Mammary epithelial cell (primary cell): ENCODE measurements at regions of chr11 and their contacts with region 1.

Region 1: DNA sequence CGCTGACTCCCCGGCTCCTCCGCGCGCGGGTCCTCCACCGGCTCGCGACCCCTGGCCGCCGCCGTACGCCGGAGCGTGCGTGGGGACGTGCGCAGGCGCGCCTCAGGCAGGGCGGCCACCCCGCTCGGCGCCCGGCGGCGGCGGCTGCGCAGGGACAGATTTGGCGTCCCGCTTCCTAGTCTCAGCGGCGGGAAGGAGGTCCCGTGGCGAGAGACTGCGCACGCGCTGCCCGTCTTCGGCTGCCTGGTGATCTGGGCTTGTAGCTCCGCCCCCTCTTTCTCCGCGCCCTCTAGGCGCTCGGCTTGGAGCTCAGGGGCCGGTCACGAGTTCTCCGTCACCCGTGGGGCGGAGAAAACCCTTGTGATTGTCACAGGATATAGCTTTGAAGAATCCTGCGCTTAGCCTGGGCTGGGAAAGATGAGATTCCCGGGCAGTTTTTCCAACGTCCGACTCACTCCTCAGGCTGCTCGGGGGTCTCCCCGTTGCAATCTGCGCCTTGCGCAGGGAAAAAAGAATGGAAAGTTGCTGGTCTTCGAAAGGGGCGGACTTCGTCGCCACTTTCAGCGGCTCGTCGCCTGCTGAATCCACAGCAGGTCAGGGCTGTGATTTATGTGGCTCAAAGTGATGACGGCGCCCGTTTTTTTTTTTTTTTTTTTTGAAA is at the start of gene PATL1:
- DNase-seq: peak; percentile 97
- H3K4me3 ChIP-seq: peak within 1 kb of the TSS; percentile 70 to 90 (median 78)
- H3K27ac ChIP-seq: peak within 1 kb of the TSS; percentile 94
- H3K4me1 ChIP-seq: peaks cover 15% of the 10 kb centered on the region
- H3K27me3 ChIP-seq: no peaks in the 10 kb centered on the region
- CTCF ChIP-seq: no peak
- total RNA-seq, gene PATL1: 11.2 to 42.8 TPM

Region 2: GRCh38 chr11:59475176-59475575 is 193.9 kb before region 1 on chr11:
- CTCF ChIA-PET with region 1: no interaction called
- dilution Hi-C with region 1: no loop called
- in situ Hi-C with region 1: no loop called
- intact Hi-C with region 1: no loop called
- DNase-seq: no peak
- H3K4me3 ChIP-seq: no peak overlapping the region
- H3K27ac ChIP-seq: no peak overlapping the region
- H3K4me1 ChIP-seq: no peaks in the 10 kb centered on the region
- H3K27me3 ChIP-seq: peaks cover 2% of the 10 kb centered on the region
- CTCF ChIP-seq: no peak

Region 3: DNA sequence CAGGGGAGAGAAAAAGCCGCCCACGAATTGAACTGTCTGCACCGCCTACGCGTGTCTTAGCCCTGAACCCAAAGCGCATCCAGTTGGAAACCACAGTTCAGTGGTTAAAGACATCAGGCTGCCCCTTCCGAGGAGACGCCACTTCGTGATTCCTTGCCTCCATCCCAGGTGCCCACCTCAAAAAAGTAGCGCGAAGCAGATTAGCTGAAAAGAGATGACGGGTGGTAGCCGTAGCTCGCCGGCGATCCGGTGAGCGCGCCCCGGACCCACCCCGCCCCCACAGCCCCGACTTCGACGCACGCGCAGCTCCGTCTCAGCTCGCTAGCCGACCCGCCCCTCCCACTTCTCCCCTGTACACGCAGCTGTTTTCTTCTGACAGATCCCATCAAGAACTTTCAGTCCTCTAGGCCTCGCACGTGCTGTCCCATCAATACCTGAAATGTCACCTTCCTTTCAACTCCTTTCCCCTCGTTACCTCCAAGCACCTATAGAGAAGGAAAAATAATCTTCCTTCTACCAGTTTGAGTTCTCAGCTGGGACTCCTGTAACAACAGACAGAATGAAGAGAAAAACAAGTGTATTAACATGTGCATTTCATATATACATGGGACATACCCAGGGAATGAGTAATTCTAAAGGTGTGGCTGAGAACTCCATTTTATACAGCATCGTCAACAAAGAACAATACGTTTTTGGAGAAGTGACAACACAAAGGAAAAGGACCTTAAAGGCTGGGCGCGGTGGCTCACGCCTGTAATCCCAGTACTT is 108.2 kb before region 1 on chr11:
- CTCF ChIA-PET with region 1: interaction called, 4 read pairs
- dilution Hi-C with region 1: no loop called
- in situ Hi-C with region 1: loop called in 1 of 2 experiments (anchors 10 kb)
- intact Hi-C with region 1: loop called (anchors 1 kb)
- DNase-seq: peak; percentile 88
- H3K4me3 ChIP-seq: peak overlapping the region; percentile 72 to 90 (median 86)
- H3K27ac ChIP-seq: peak overlapping the region; percentile 94
- H3K4me1 ChIP-seq: peaks cover 8% of the 10 kb centered on the region
- H3K27me3 ChIP-seq: no peaks in the 10 kb centered on the region
- CTCF ChIP-seq: no peak

Region 4: DNA sequence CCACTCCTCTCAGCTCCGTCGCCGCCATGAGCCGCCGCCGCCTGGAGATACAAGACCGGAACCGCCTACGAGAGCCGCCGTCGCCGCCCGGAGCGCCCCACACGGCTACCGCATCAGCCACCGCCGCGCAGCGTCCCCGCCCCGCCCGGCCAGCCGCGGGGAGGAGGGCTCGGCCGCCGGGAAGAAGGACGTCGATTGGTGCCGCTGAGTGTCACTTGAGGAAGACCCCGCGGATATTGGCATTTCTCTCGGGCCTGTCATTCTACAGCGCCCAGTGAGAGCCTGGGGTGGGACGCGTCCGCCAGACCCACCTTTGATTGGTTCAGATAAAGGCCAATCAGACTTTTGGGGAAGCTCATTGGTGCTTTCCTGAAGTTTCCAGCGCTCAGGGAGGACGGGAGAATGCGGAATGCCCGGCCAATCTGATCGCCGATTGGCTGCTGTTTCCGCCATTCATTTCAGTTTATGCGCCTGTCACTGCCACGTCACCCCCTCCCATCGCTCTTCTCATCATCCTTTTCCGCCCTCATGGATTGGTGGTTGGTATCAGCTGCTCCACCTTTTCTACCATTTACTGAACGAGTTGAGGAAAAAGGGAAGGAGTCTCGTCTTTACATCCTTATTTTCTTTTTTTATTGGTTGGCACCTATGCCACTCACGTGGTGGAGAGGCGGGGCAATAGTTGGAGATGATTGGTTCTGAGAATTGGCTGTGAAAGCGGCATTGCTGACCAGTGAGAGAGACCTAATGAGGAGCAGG is 53.3 kb before region 1 on chr11 and contains the start of gene OSBP:
- CTCF ChIA-PET with region 1: no interaction called
- dilution Hi-C with region 1: no loop called
- in situ Hi-C with region 1: no loop called
- intact Hi-C with region 1: loop called (anchors 2 kb)
- DNase-seq: peak; percentile 100
- H3K4me3 ChIP-seq: peak within 1 kb of the TSS; percentile 68 to 85 (median 79)
- H3K27ac ChIP-seq: peak within 1 kb of the TSS; percentile 79
- H3K4me1 ChIP-seq: peaks cover 17% of the 10 kb centered on the region
- H3K27me3 ChIP-seq: no peaks in the 10 kb centered on the region
- CTCF ChIP-seq: no peak
- total RNA-seq, gene OSBP: 34.0 to 52.0 TPM

Region 5: DNA sequence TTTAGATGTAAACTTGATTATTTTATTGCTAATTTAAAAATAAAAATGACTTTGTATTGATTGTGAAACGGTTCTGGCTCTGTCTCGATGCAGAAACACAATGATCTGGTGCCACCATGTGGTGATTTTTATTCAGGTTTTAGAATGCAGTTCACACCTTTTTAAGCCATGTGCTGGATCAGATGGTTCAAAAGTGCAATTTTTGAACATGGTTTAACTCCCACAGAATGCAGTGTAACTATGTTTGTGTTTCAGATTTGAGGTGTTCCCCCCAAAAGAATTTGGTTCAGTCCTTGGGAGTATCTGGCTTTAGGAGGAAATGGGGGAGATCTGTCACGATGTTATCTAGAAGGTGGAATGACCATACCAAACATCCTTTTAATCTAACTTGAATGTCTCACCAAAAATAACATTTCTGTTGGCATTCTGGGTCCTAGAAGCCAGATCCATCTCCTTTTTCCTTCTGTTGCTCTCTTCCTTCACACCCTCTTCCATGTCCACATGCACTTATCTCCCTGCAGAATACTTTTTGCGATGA is 133.6 kb after region 1 on chr11:
- CTCF ChIA-PET with region 1: no interaction called
- dilution Hi-C with region 1: no loop called
- in situ Hi-C with region 1: no loop called
- intact Hi-C with region 1: loop called (anchors 5 kb)
- DNase-seq: peak; percentile 44
- H3K4me3 ChIP-seq: no peak overlapping the region
- H3K27ac ChIP-seq: no peak overlapping the region
- H3K4me1 ChIP-seq: peaks cover 6% of the 10 kb centered on the region
- H3K27me3 ChIP-seq: no peaks in the 10 kb centered on the region
- CTCF ChIP-seq: peak; percentile 59 to 67

Region 6: GRCh38 chr11:59849129-59849528 is 180.0 kb after region 1 on chr11:
- CTCF ChIA-PET with region 1: no interaction called
- dilution Hi-C with region 1: no loop called
- in situ Hi-C with region 1: no loop called
- intact Hi-C with region 1: no loop called
- DNase-seq: no peak
- H3K4me3 ChIP-seq: no peak overlapping the region
- H3K27ac ChIP-seq: no peak overlapping the region
- H3K4me1 ChIP-seq: no peaks in the 10 kb centered on the region
- H3K27me3 ChIP-seq: no peaks in the 10 kb centered on the region
- CTCF ChIP-seq: no peak